Caco-2 (cell line): ENCODE measurements at regions of chr5 and their contacts with region 1.

Region 1: DNA sequence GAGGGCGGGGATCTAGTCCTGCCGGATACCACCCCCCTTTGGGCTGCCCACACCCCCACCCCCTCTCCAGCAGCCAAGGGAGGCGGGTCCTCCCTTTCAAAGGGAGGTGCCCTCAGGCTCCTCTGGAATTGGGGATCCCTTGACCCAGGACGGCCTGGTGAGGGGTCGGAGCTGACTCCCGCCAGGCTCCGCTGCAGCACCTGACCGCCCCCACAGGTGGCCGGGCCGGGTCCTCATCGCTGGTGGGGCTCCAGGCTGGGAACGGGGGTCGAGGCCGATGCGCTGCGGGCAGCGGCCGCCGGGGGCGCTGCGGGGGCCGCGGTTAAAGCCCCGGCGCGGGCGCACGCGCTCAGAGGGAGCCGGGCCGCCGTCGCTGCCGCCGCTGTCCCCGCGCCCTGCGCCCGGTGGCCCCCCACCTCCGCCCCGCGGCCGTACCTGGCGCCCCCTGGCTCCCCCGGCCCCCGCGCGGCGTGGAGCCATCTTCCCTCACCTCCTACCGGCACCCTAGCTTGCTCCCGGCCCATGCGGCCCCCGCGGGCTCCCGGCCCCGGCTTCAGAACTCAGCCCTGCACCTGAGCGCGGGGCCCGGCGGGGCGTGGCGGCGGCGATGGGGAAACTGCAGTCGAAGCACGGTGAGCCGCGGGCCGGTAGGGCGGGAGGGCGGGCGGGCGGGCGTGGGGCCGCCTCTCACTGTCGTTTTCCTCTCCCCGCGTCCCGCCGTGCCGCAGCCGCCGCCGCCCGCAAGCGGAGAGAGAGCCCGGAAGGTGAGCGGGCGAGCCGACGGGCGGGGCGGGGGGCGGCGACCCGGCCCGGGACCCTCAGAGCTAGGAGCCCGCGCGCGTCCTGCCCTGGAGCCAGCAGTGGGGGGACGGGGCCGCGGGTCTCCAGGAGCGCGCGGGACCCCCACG is at the start of gene NKD2:
- DNase-seq: peak; percentile 39 to 76
- H3K4me3 ChIP-seq: peak within 1 kb of the TSS; percentile 50
- H3K4me3 Mint-ChIP-seq: peak within 1 kb of the TSS; percentile 63
- H3K27ac Mint-ChIP-seq: no peak within 1 kb of the TSS
- H3K4me1 ChIP-seq: peaks cover 36% of the 10 kb centered on the region
- H3K4me1 Mint-ChIP-seq: peaks cover 10% of the 10 kb centered on the region
- H3K27me3 ChIP-seq: no peaks in the 10 kb centered on the region
- H3K27me3 Mint-ChIP-seq: no peaks in the 10 kb centered on the region
- CTCF ChIP-seq: peak; percentile 39 to 81
- total RNA-seq, gene NKD2: 13.6 and 17.7 TPM in 2 replicates

Region 2: GRCh38 chr5:513216-514100 is 495.2 kb before region 1 on chr5:
- CTCF ChIA-PET with region 1: no interaction called
- POLR2A ChIA-PET with region 1: no interaction called
- intact Hi-C with region 1: no loop called
- DNase-seq: no peak
- H3K4me3 ChIP-seq: no peak overlapping the region
- H3K4me3 Mint-ChIP-seq: no peak overlapping the region
- H3K27ac Mint-ChIP-seq: no peak overlapping the region
- H3K4me1 ChIP-seq: no peaks in the 10 kb centered on the region; the same call in 1 of the 2 replicates
- H3K4me1 Mint-ChIP-seq: no peaks in the 10 kb centered on the region
- H3K27me3 ChIP-seq: no peaks in the 10 kb centered on the region
- H3K27me3 Mint-ChIP-seq: peaks cover 14% of the 10 kb centered on the region
- CTCF ChIP-seq: no peak

Region 3: GRCh38 chr5:982377-983237 is 26.1 kb before region 1 on chr5:
- CTCF ChIA-PET with region 1: interaction called, 11 read pairs
- POLR2A ChIA-PET with region 1: no interaction called
- intact Hi-C with region 1: no loop called
- DNase-seq: peak in 1 of 2 experiments; percentile 47
- H3K4me3 ChIP-seq: no peak overlapping the region
- H3K4me3 Mint-ChIP-seq: no peak overlapping the region
- H3K27ac Mint-ChIP-seq: no peak overlapping the region
- H3K4me1 ChIP-seq: peaks cover 9% of the 10 kb centered on the region; the same call in 1 of the 2 replicates
- H3K4me1 Mint-ChIP-seq: no peaks in the 10 kb centered on the region
- H3K27me3 ChIP-seq: no peaks in the 10 kb centered on the region
- H3K27me3 Mint-ChIP-seq: no peaks in the 10 kb centered on the region
- CTCF ChIP-seq: peak in 1 of 2 experiments; percentile 39

Region 4: DNA sequence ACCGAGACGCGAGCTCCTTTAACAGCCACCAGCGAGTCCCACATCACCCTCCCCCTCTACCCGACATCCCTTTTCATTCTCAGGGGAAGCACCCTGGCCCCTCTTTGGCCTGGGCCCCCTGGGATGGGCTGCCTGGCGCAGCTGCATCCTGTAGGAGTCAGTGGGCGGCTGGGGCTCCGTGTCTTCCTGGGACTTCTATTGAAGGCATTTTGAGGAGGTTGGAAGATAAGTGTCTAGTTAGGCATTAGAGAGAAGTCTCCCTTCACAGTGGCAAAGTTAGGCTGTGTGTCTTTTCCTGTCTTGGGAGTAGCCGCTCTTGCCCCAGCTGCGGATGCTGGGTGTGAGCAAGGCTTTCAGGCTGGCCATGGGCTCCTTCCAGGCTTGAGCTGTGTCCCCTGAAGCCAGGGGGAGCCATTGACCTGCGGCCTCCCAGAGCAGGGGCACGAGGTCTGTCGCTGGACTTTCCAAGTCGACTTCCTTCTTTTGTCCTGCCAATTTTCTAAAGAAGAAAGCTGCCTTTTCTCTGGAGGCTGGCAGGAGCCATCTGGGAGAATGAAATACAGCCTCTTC is 18.7 kb before region 1 on chr5:
- CTCF ChIA-PET with region 1: interaction called, 12 read pairs
- POLR2A ChIA-PET with region 1: no interaction called
- intact Hi-C with region 1: loop called (anchors 1 kb)
- DNase-seq: peak in 1 of 2 experiments; percentile 58
- H3K4me3 ChIP-seq: no peak overlapping the region
- H3K4me3 Mint-ChIP-seq: no peak overlapping the region
- H3K27ac Mint-ChIP-seq: no peak overlapping the region
- H3K4me1 ChIP-seq: peaks cover 7% of the 10 kb centered on the region; the same call in 1 of the 2 replicates
- H3K4me1 Mint-ChIP-seq: peaks cover 8% of the 10 kb centered on the region
- H3K27me3 ChIP-seq: no peaks in the 10 kb centered on the region
- H3K27me3 Mint-ChIP-seq: no peaks in the 10 kb centered on the region
- CTCF ChIP-seq: peak; percentile 10 to 73